Dendritic cell treated with granulocyte-macrophage colony-stimulating factor and Interleukin-4, amounts not matched to agents 40 ng/mL and 50 ng/mL, for 4 days (primary cell): ENCODE measurements at regions of chr1 and their contacts with region 1.

Region 1: DNA sequence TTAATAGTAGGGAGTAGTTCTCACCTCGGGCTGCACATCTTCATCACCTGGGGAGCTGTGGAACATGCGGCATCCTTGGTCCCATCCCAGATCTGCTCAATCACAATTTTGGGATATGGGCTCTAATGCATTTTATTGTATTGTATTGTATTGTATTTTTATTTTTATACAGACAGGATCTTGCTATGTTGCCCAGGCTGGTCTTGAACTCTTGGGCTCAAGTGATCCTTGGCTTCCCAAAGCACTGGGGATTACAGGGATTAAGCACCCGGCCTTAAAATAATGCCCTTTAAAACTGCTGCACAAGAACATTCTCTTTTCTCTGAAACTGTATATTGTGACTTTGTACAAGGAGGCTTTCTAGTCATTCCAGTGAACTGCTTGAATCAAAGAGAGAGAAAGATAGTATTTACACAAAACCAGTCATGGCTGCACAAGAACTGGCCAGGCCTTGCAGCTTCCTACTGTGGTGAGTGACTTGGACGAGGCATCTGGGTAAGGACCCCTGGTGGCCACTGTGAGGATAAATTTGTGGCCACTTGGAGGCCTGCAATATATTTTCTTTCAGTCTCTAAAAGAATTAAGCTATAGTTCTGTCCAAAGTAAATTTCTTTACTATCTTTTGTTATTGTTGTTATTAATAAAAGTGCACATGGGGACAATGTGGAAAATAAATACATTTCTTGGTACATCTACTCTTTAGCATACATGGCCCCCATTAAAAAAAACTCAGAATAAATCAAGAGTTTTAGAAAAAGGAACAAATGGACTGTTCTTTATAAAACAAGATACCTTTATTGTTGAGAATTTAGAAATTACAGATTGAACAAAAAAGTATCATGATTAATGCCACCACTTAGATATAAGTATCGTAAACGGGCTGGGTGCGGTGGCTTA is 48.0 kb downstream of the TBCE start:
- H3K4me3 Mint-ChIP-seq: no peak overlapping the region
- H3K27ac Mint-ChIP-seq: no peak overlapping the region
- H3K4me1 Mint-ChIP-seq: peaks cover 9% of the 10 kb centered on the region
- H3K27me3 Mint-ChIP-seq: no peaks in the 10 kb centered on the region

Region 2: GRCh38 chr1:235100194-235100772 is 315.0 kb before region 1 on chr1:
- intact Hi-C with region 1: loop called (anchors 5 kb)
- H3K4me3 Mint-ChIP-seq: no peak overlapping the region
- H3K27ac Mint-ChIP-seq: no peak overlapping the region
- H3K4me1 Mint-ChIP-seq: peaks cover 23% of the 10 kb centered on the region
- H3K27me3 Mint-ChIP-seq: peaks cover 26% of the 10 kb centered on the region

Region 3: DNA sequence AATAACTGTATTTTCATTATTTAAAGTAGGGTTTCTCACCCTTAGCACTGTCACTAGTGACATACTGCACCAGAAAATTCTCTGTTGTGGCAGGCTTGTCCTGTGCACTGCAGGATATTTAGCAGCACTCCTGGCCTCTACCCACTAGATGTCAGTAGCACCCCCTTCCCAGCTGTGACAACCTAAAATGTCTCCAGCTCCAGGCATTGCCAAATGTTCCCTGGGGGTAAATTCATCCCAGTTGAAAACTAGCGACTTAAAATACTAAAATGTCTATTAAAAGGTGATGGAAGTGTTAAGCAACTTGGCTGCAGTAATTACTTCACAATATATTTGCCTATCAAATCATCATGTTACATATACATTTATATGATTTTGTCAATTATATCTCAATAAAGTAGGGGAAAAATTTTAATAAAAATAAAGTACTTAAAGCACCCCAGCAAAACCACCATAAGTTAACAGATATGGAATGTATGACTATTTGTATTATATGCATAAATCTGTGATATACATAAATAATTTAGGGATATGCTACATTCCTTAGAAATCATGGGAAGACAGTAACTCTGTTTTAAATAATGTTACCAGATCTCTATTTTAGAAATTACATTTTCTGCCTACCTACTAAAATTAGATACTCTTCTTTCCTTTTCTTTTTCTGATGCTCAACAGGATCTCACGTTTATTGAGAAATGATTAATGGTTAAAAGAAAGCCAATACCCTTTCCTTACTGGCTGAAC is 161.9 kb before region 1 on chr1:
- intact Hi-C with region 1: loop called (anchors 1 kb)
- H3K4me3 Mint-ChIP-seq: no peak overlapping the region
- H3K27ac Mint-ChIP-seq: no peak overlapping the region
- H3K4me1 Mint-ChIP-seq: no peaks in the 10 kb centered on the region
- H3K27me3 Mint-ChIP-seq: no peaks in the 10 kb centered on the region

Region 4: GRCh38 chr1:235266325-235266724 is 148.9 kb before region 1 on chr1:
- intact Hi-C with region 1: no loop called
- H3K4me3 Mint-ChIP-seq: no peak overlapping the region
- H3K27ac Mint-ChIP-seq: no peak overlapping the region
- H3K4me1 Mint-ChIP-seq: peaks cover 17% of the 10 kb centered on the region
- H3K27me3 Mint-ChIP-seq: no peaks in the 10 kb centered on the region

Region 5: GRCh38 chr1:235304549-235305451 is 110.5 kb before region 1 on chr1:
- intact Hi-C with region 1: no loop called
- H3K4me3 Mint-ChIP-seq: no peak overlapping the region
- H3K27ac Mint-ChIP-seq: peak overlapping the region; percentile 60
- H3K4me1 Mint-ChIP-seq: peaks cover 24% of the 10 kb centered on the region
- H3K27me3 Mint-ChIP-seq: no peaks in the 10 kb centered on the region

Region 6: DNA sequence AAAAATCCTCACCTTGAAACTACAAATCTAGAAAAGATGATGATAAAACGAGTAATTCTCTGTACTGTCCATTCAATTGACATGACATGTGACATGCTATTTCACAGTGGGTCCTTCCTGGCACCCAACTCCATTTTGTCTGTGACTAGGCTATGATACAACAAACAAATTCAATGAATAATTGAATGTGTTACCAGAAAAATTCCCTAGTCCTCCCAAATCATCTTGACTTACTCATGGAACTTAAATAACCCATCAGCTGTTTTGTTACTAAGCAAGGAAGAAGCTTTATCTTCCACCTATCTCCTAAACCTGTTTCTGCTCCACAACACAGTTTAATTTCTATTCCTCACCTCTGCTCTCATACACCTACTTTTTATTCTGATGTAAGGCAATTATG is 58.5 kb after region 1 on chr1:
- intact Hi-C with region 1: no loop called
- H3K4me3 Mint-ChIP-seq: no peak overlapping the region
- H3K27ac Mint-ChIP-seq: no peak overlapping the region
- H3K4me1 Mint-ChIP-seq: no peaks in the 10 kb centered on the region
- H3K27me3 Mint-ChIP-seq: no peaks in the 10 kb centered on the region

Region 7: GRCh38 chr1:235553112-235553551 is 137.9 kb after region 1 on chr1:
- intact Hi-C with region 1: no loop called
- H3K4me3 Mint-ChIP-seq: no peak overlapping the region
- H3K27ac Mint-ChIP-seq: no peak overlapping the region
- H3K4me1 Mint-ChIP-seq: no peaks in the 10 kb centered on the region
- H3K27me3 Mint-ChIP-seq: peaks cover 3% of the 10 kb centered on the region